ENCODE measurements at regions of chr1 and their contacts with region 1.

Region 1: GRCh38 chr1:197399755-197400527 is 131.9 kb downstream of the CRB1 start:
- DNase-seq: peak; percentile 17
- H3K4me3 Mint-ChIP-seq: no peak overlapping the region
- H3K27ac Mint-ChIP-seq: no peak overlapping the region
- H3K4me1 Mint-ChIP-seq: peaks cover 2% of the 10 kb centered on the region
- H3K27me3 Mint-ChIP-seq: peaks cover 4% of the 10 kb centered on the region

Region 2: DNA sequence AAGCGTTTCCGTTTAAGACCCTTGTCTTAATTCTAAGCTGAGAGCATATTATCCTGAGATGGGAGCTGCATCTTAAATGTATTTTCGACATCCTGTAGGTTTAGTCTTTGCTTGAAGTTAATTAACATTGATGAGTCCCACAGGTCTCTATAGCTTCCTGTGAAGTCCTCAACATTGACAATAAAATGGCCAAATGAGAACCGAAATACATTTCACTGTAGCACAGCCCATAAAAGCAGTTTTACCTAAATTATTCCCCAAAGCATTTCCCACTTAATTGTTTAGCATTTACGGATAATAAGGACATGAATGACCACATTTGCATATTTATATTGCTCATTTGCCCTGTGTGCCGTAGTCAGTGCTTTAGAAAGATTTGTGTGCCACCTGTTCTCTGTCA is 15.5 kb before region 1 on chr1:
- CTCF ChIA-PET with region 1: interaction called, 19 read pairs
- POLR2A ChIA-PET with region 1: no interaction called
- intact Hi-C with region 1: no loop called
- DNase-seq: no peak
- H3K4me3 Mint-ChIP-seq: no peak overlapping the region
- H3K27ac Mint-ChIP-seq: no peak overlapping the region
- H3K4me1 Mint-ChIP-seq: peaks cover 3% of the 10 kb centered on the region
- H3K27me3 Mint-ChIP-seq: peaks cover 3% of the 10 kb centered on the region

Region 3: GRCh38 chr1:197481101-197481500 is 81.2 kb after region 1 on chr1:
- CTCF ChIA-PET with region 1: no interaction called
- POLR2A ChIA-PET with region 1: no interaction called
- intact Hi-C with region 1: loop called (anchors 5 kb)
- DNase-seq: peak; percentile 38
- H3K4me3 Mint-ChIP-seq: no peak overlapping the region
- H3K27ac Mint-ChIP-seq: no peak overlapping the region
- H3K4me1 Mint-ChIP-seq: peaks cover 12% of the 10 kb centered on the region
- H3K27me3 Mint-ChIP-seq: peaks cover 1% of the 10 kb centered on the region

Region 4: DNA sequence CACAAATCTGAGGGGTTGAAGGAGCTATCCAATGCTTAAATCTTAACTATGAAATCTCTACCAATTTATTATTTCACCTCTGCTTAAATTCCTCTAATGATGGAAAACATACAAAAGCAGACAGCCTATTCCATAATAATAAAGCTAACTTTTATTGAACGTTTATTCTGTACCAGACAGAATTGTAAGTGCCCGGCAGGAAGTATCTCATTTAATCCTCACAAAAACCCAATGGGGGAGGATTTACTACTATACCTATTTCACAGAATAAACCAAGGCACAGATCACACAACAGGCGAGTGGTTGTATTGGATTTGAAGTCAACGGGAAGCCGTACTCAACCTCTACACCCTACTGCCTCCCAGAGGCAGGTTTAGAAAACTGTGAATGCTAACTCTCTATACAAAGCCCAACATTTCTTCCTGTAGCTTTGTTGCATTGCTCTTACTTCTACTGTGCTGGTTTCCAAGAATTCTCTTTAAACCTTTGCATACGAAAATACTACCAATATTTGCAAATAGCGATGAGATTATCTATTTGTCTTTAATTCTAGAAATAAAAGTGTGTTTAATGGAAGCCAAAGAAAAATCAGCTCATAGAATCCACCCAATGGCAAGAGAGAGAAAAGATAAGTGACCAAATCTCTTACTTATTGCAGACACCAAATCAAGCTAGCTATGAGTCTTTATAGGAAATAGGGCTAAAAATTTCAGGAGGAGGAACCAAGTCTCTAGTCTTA is 469.0 kb after region 1 on chr1:
- CTCF ChIA-PET with region 1: no interaction called
- POLR2A ChIA-PET with region 1: no interaction called
- intact Hi-C with region 1: loop called (anchors 1 kb)
- DNase-seq: peak; percentile 50
- H3K4me3 Mint-ChIP-seq: no peak overlapping the region
- H3K27ac Mint-ChIP-seq: no peak overlapping the region
- H3K4me1 Mint-ChIP-seq: no peaks in the 10 kb centered on the region
- H3K27me3 Mint-ChIP-seq: no peaks in the 10 kb centered on the region

Region 5: GRCh38 chr1:197902454-197903195 is 502.7 kb after region 1 on chr1 and contains the start of gene C1orf53:
- CTCF ChIA-PET with region 1: no interaction called
- POLR2A ChIA-PET with region 1: no interaction called
- intact Hi-C with region 1: loop called (anchors 2 kb)
- DNase-seq: peak; percentile 85
- H3K4me3 Mint-ChIP-seq: peak within 1 kb of the TSS; percentile 77
- H3K27ac Mint-ChIP-seq: peak within 1 kb of the TSS; percentile 50
- H3K4me1 Mint-ChIP-seq: peaks cover 9% of the 10 kb centered on the region
- H3K27me3 Mint-ChIP-seq: peaks cover 41% of the 10 kb centered on the region
- total RNA-seq, gene C1orf53: 0.40 to 0.58 TPM

Region 6: GRCh38 chr1:197924516-197925123 is 524.7 kb after region 1 on chr1:
- CTCF ChIA-PET with region 1: no interaction called
- POLR2A ChIA-PET with region 1: no interaction called
- intact Hi-C with region 1: loop called (anchors 2 kb)
- DNase-seq: peak; percentile 45
- H3K4me3 Mint-ChIP-seq: no peak overlapping the region
- H3K27ac Mint-ChIP-seq: no peak overlapping the region
- H3K4me1 Mint-ChIP-seq: peaks cover 20% of the 10 kb centered on the region
- H3K27me3 Mint-ChIP-seq: peaks cover 56% of the 10 kb centered on the region